ENCODE measurements at regions of chr1 and their contacts with region 1.

Region 1: DNA sequence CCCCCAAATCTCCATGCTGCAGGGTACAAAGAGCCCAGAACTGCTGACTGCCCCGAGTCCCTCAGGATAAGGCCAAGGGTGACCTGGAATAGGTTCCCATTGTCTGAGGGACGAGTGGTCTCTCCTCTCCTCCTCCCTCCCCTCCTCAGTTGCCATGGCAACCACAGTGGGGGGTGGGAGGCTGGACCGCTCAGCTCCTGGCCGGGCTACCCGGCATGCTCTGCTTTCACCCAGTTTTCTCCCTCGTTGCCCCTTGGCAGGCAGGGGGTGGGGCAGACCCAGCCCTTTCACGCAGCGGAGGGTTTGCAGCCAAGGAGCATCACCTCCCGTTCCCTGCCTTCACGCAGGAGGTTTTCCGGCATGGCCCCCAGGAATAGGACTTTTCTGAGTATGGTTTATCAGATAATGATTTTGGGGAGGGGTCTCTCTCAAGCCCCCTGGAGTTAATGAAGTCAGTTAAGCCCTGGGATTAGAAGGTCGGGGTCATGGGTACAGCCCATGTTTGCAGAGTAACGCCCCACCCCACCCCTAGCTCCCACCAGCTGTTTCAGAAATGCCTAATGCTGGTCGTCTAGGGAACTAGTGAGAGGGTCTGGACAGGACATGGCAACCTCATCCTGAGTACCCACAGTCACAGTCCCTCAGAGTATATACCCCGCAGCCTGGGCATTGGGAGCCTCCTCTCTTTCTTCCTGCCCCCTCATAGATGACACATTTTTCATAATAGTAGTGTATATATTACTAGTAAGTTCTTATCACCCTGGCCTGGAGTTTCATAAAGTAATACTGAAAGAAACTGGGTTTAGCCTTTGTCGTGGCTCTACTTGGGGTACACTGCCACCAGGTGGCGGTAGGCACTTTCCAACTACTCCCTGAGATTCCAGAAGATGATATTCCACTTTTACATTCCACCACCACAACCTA is 20.7 kb downstream of the C1QB start:
- DNase-seq: peak; percentile 36
- ATAC-seq: peak; percentile 80; the same call in 1 of the 2 replicates
- H3K4me3 ChIP-seq: no peak overlapping the region
- H3K27ac ChIP-seq: no peak overlapping the region
- H3K4me1 ChIP-seq: no peaks in the 10 kb centered on the region
- H3K27me3 ChIP-seq: no peaks in the 10 kb centered on the region
- CTCF ChIP-seq: peak; percentile 86

Region 2: GRCh38 chr1:22889213-22889827 is 215.6 kb after region 1 on chr1:
- CTCF ChIA-PET with region 1: interaction called, 3 read pairs
- POLR2A ChIA-PET with region 1: no interaction called
- in situ Hi-C with region 1: no loop called
- intact Hi-C with region 1: loop called (anchors 5 kb)
- DNase-seq: peak; percentile 53
- ATAC-seq: peak; percentile 71
- H3K4me3 ChIP-seq: no peak overlapping the region
- H3K27ac ChIP-seq: no peak overlapping the region
- H3K4me1 ChIP-seq: no peaks in the 10 kb centered on the region
- H3K27me3 ChIP-seq: no peaks in the 10 kb centered on the region
- CTCF ChIP-seq: peak; percentile 90

Measured in Panc1 (cell line).